ENCODE measurements at regions of chr11 and their contacts with region 1.

Region 1: GRCh38 chr11:72352859-72353551 is 81.3 kb downstream of the CLPB start:
- DNase-seq: peak in 1 of 2 experiments; percentile 17
- H3K4me3 ChIP-seq: no peak overlapping the region
- H3K27ac ChIP-seq: no peak overlapping the region
- H3K4me1 ChIP-seq: peaks cover 0 to 8% (median 0%) of the 10 kb centered on the region in 4 experiments; a peak in 1 of 7 replicates
- H3K27me3 ChIP-seq: no peaks in the 10 kb centered on the region
- CTCF ChIP-seq: peak; percentile 37 to 68 (median 44)
- EP300 ChIP-seq: no peak
- POLR2A ChIP-seq: no peak
- RAD21 ChIP-seq: peak; percentile 63 to 69

Region 2: DNA sequence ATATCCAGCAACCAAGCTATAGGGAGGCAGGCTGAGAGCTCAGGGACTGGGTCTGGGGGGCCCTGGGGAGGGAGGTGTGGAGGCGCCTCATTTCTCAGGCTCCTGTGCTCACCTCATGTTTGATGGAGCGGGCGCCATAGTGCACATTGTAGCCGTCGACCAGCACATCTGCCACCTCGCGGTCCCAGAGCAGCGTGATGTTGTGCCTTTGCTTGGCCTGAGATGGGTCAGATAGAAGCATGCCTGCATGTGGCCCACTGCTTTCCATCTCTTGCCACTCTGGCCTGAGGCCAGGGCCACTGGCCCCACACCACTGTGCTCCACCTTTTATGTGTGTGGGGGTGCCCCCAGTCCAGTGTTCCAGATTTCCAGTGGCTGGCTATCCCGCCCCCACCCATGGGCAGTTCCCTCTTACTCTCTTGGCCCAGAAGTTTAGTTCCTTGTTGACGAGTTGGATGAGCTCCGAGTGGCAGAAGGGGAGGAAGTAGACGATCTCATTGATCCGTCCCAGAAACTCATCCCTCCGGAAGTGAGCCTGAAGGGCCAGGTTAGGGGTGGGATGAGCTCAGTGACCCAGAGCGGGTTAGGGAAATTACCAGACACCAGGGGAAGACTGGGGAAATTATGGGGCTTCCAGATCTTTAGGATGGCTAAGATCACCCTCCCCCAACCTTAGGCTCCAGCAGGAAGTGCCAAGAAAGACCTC is 58.9 kb before region 1 on chr11:
- CTCF ChIA-PET with region 1: interaction called, 11 read pairs
- POLR2A ChIA-PET with region 1: no interaction called
- DNase-seq: peak in 1 of 2 experiments; percentile 34
- H3K4me3 ChIP-seq: no peak overlapping the region
- H3K27ac ChIP-seq: no peak overlapping the region
- H3K4me1 ChIP-seq: no peaks in the 10 kb centered on the region
- H3K27me3 ChIP-seq: no peaks in the 10 kb centered on the region
- CTCF ChIP-seq: no peak
- EP300 ChIP-seq: no peak
- POLR2A ChIP-seq: no peak
- RAD21 ChIP-seq: no peak

Region 3: DNA sequence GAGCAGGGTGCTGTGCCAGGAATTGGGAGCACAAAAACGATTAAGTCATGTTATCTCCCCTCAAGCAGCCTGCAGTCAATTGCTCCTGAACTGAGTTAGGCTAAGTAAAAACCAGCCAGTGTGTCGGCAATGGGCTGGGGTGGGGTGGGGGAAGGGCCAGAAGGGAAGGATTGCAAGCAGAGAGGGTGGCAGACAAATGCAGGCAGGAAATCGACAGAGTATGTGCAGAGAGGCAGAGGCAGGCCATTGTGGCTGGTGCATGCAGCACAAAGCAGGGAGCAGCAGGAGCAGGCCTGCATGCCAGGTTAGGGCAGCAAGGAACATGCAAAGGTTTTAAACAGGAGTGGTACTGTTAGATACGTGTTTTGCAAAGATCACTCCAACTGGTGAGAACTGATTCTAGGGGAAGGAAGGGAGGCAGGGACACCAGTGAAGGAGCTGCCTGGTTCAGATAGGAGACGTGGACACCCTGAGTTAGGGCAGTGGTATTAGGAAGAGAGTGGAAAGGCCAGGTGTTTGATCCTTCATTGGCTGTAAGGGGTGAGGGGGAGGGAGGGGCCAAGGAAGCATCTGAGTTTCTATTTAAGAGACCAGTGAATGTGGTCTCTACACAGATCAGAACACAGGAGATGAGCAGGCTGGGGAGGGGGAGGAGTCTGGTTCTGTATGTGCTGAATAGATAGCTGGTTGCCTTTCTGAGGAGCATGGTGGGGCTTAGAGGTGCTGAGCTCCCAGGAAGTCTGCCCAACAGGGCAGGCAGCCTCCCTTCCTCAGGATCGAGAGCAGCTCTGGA is 38.2 kb before region 1 on chr11:
- CTCF ChIA-PET with region 1: interaction called, 12 read pairs
- POLR2A ChIA-PET with region 1: no interaction called
- DNase-seq: no peak
- H3K4me3 ChIP-seq: no peak overlapping the region
- H3K27ac ChIP-seq: 0 out of 2 replicates have a peak overlapping the region, but pooled peaks have one; percentile 3
- H3K4me1 ChIP-seq: peaks cover 0 to 8% (median 5%) of the 10 kb centered on the region in 4 experiments; a peak in 6 of 7 replicates
- H3K27me3 ChIP-seq: no peaks in the 10 kb centered on the region
- CTCF ChIP-seq: no peak
- EP300 ChIP-seq: no peak
- POLR2A ChIP-seq: no peak
- RAD21 ChIP-seq: no peak

Region 4: DNA sequence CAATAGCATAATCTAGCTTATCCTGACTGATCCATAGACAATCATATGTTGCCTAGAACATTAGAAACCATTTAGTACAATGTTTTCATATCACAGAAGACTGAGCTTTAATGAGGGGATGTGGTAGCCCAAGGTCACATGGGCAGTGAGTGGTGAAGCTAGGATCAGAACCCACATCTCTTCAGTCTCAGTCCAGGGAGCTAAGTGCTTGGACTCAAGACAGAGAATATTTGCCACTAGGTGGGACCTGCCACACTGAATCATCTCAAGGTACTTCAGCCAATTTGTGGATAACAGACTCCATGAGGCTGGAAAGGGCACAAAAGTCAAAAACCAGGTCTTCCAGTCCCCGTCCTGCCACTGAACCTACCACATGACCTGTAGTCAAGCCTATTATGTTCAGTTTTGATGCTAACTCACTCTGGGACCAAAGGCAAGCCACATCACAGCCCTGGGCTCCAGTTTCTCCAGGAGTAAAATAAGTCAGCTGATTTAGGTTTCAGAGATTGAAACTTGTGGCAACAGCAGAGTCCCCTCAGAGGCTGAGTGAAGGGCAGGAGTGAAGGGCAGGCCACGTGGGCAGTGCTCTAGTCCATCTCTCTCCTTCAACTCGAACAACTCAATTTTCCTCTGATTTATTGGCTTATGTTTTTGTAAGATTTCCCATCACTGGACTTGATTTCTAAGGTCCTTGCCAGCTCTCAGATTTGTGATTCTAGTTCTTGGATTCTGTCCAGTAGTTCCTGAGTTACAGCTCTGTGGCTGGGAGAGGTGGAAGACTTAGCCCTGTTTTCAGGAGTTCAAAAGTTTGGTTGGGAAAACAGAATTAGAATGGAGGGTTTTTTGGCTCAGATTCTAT is 24.4 kb before region 1 on chr11:
- CTCF ChIA-PET with region 1: interaction called, 64 read pairs
- POLR2A ChIA-PET with region 1: no interaction called
- DNase-seq: no peak
- H3K4me3 ChIP-seq: no peak overlapping the region
- H3K27ac ChIP-seq: no peak overlapping the region
- H3K4me1 ChIP-seq: peaks cover 2 to 6% (median 4%) of the 10 kb centered on the region in 4 experiments; a peak in 6 of 7 replicates
- H3K27me3 ChIP-seq: no peaks in the 10 kb centered on the region
- CTCF ChIP-seq: no peak; a peak in 1 of 4 replicates
- EP300 ChIP-seq: no peak
- POLR2A ChIP-seq: no peak
- RAD21 ChIP-seq: peak; percentile 13 to 45; a peak in 2 of 4 replicates

Region 5: GRCh38 chr11:72333661-72334060 is 19.3 kb before region 1 on chr11:
- CTCF ChIA-PET with region 1: interaction called, 64 read pairs
- POLR2A ChIA-PET with region 1: no interaction called
- DNase-seq: peak; percentile 59 to 66
- H3K4me3 ChIP-seq: peak overlapping the region in 2 of 4 experiments; percentile 15 to 16; a peak in 1 of 8 replicates
- H3K27ac ChIP-seq: no peak overlapping the region
- H3K4me1 ChIP-seq: peaks cover 5 to 17% (median 9%) of the 10 kb centered on the region in 4 experiments
- H3K27me3 ChIP-seq: no peaks in the 10 kb centered on the region
- CTCF ChIP-seq: peak; percentile 15 to 81 (median 78)
- EP300 ChIP-seq: no peak
- POLR2A ChIP-seq: no peak
- RAD21 ChIP-seq: peak; percentile 71 to 85

Region 6: DNA sequence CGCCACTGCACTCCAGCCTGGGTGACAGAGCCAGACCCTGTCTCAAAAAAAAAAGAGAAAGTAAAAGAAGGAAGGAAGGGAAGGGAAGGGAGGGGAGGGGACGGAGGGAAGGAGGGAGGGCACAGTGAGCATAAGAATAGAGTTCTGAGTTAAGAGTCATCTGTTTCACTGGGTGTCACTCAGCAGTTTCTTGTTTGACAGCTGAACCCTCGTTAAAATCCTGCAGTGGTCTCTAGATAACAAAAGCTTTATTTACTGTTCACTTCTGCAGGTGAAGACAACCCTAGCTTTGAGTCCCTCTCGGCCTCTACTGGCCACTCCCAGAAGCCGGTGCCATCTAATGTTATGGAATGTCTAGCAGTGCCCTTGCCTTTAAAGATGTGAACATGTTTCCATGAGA is 10.1 kb after region 1 on chr11:
- CTCF ChIA-PET with region 1: interaction called, 17 read pairs
- POLR2A ChIA-PET with region 1: no interaction called
- DNase-seq: no peak
- H3K4me3 ChIP-seq: no peak overlapping the region
- H3K27ac ChIP-seq: no peak overlapping the region
- H3K4me1 ChIP-seq: no peaks in the 10 kb centered on the region
- H3K27me3 ChIP-seq: no peaks in the 10 kb centered on the region
- CTCF ChIP-seq: no peak
- EP300 ChIP-seq: no peak
- POLR2A ChIP-seq: no peak
- RAD21 ChIP-seq: no peak

Region 7: GRCh38 chr11:72369743-72370142 is 16.7 kb after region 1 on chr11:
- CTCF ChIA-PET with region 1: interaction called, 17 read pairs
- POLR2A ChIA-PET with region 1: interaction called, 4 read pairs
- DNase-seq: no peak
- H3K4me3 ChIP-seq: no peak overlapping the region
- H3K27ac ChIP-seq: no peak overlapping the region
- H3K4me1 ChIP-seq: no peaks in the 10 kb centered on the region; a peak in 1 of 7 replicates
- H3K27me3 ChIP-seq: no peaks in the 10 kb centered on the region
- CTCF ChIP-seq: no peak
- EP300 ChIP-seq: no peak
- POLR2A ChIP-seq: no peak
- RAD21 ChIP-seq: no peak

Measured in H1 (cell line).